ENCODE measurements at regions of chr13 and their contacts with region 1.

Region 1: GRCh38 chr13:99296398-99296797 is 10.8 kb downstream of the GPR183 start:
- DNase-seq: no peak
- H3K4me3 Mint-ChIP-seq: peak overlapping the region; percentile 48
- H3K27ac Mint-ChIP-seq: peak overlapping the region; percentile 87
- H3K4me1 Mint-ChIP-seq: peaks cover 75% of the 10 kb centered on the region
- H3K27me3 Mint-ChIP-seq: no peaks in the 10 kb centered on the region

Region 2: DNA sequence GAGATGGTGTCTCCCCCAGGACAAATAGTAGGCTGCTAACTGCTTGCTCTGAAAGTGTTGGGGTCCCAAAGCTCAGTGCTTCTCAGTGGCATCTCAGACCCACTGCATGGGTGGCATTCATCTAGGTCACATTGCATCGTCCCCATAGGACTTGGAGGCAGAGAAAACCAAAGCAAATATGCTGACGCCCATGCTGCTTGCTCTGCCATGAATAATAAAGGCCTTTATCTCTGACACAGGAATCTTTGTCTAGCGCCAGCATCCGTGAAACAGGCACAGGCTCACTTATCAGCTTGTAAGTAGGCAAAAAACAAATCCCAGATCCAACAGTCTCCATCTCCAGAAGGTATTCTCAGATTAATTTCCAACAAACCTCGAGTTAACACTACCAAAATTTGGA is 1361.8 kb before region 1 on chr13:
- CTCF ChIA-PET with region 1: no interaction called
- intact Hi-C with region 1: no loop called
- DNase-seq: no peak
- H3K4me3 Mint-ChIP-seq: no peak overlapping the region
- H3K27ac Mint-ChIP-seq: no peak overlapping the region
- H3K4me1 Mint-ChIP-seq: no peaks in the 10 kb centered on the region
- H3K27me3 Mint-ChIP-seq: peaks cover 25% of the 10 kb centered on the region

Region 3: GRCh38 chr13:99275093-99275469 is 21.3 kb before region 1 on chr13:
- CTCF ChIA-PET with region 1: interaction called, 49 read pairs
- intact Hi-C with region 1: loop called (anchors 1 kb)
- DNase-seq: peak; percentile 76
- H3K4me3 Mint-ChIP-seq: no peak overlapping the region
- H3K27ac Mint-ChIP-seq: peak overlapping the region; percentile 54
- H3K4me1 Mint-ChIP-seq: peaks cover 93% of the 10 kb centered on the region
- H3K27me3 Mint-ChIP-seq: no peaks in the 10 kb centered on the region

Region 4: GRCh38 chr13:99314640-99315176 is 18.3 kb after region 1 on chr13:
- CTCF ChIA-PET with region 1: interaction called, 7 read pairs
- intact Hi-C with region 1: loop called (anchors 1 kb)
- DNase-seq: peak; percentile 92
- H3K4me3 Mint-ChIP-seq: peak overlapping the region; percentile 54
- H3K27ac Mint-ChIP-seq: peak overlapping the region; percentile 96
- H3K4me1 Mint-ChIP-seq: peaks cover 82% of the 10 kb centered on the region
- H3K27me3 Mint-ChIP-seq: no peaks in the 10 kb centered on the region

Region 5: DNA sequence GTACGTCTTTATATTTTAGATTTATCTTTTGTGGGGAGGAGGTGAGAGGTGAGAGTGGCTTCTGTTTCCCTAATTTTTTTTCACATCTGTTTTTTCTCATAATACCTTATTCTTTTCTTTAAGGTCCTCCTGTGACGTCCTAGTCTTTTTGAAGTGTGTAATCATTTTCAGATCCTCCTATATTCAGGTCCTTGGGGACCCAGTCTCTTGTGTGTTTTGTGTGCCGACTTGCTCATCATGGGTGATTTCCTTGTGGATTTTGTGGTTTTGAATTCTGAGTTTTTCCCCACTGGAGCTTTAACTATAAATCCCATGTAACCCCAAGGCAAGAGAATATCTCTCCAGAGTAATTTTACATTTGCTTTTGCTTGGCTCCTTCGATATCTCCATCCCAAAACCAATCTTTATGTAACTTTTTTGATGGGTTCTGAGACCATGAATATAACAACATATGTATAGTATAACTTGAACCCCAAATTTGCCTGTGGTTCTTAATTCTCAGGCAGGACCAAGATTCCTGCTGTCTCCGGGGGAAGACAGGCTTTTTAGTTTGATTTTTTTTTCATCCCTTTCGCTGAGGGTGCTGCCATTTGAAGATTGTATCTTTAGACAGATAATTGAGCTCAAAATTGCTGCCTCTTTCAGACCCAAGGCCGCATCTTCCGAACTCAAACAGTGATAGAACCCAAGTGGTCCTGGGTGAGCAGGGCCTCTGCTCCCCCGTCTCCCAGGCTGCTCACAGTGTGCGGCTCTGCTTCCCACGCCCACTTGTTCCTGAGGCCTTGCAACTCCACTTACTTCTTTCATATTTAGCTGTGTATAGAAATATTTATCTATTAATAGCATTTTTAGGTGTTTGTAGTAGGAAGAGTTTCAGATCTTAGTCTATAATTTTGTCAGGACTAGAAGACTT is 69.9 kb after region 1 on chr13:
- CTCF ChIA-PET with region 1: interaction called, 3 read pairs
- intact Hi-C with region 1: loop called (anchors 1 kb)
- DNase-seq: peak; percentile 28
- H3K4me3 Mint-ChIP-seq: peak overlapping the region; percentile 17
- H3K27ac Mint-ChIP-seq: peak overlapping the region; percentile 48
- H3K4me1 Mint-ChIP-seq: peaks cover 87% of the 10 kb centered on the region
- H3K27me3 Mint-ChIP-seq: no peaks in the 10 kb centered on the region

Region 6: GRCh38 chr13:99380921-99381645 is 84.7 kb after region 1 on chr13:
- CTCF ChIA-PET with region 1: interaction called, 3 read pairs
- intact Hi-C with region 1: loop called (anchors 1 kb)
- DNase-seq: peak; percentile 91
- H3K4me3 Mint-ChIP-seq: no peak overlapping the region
- H3K27ac Mint-ChIP-seq: peak overlapping the region; percentile 79
- H3K4me1 Mint-ChIP-seq: peaks cover 84% of the 10 kb centered on the region
- H3K27me3 Mint-ChIP-seq: no peaks in the 10 kb centered on the region